Naive thymus-derived CD4-positive, alpha-beta T cell (primary cell): ENCODE measurements at regions of chr1 and their contacts with region 1.

Region 1: GRCh38 chr1:201254625-201255506 is 28.4 kb upstream of the PKP1 start:
- DNase-seq: peak in 8 of 9 donors; percentile 23 to 76 (median 35)
- ATAC-seq: peak; percentile 71
- H3K4me3 ChIP-seq: no peak overlapping the region
- H3K4me3 Mint-ChIP-seq: no peak overlapping the region
- H3K27ac ChIP-seq: no peak overlapping the region
- H3K27ac Mint-ChIP-seq: no peak overlapping the region
- H3K4me1 ChIP-seq: no peaks in the 10 kb centered on the region
- H3K4me1 Mint-ChIP-seq: peaks cover 0 to 2% (median 0%) of the 10 kb centered on the region in 7 donors
- H3K27me3 ChIP-seq: peaks cover 0 to 3% of the 10 kb centered on the region in 2 donors
- H3K27me3 Mint-ChIP-seq: peaks cover 0 to 26% (median 6%) of the 10 kb centered on the region in 5 donors

Region 2: DNA sequence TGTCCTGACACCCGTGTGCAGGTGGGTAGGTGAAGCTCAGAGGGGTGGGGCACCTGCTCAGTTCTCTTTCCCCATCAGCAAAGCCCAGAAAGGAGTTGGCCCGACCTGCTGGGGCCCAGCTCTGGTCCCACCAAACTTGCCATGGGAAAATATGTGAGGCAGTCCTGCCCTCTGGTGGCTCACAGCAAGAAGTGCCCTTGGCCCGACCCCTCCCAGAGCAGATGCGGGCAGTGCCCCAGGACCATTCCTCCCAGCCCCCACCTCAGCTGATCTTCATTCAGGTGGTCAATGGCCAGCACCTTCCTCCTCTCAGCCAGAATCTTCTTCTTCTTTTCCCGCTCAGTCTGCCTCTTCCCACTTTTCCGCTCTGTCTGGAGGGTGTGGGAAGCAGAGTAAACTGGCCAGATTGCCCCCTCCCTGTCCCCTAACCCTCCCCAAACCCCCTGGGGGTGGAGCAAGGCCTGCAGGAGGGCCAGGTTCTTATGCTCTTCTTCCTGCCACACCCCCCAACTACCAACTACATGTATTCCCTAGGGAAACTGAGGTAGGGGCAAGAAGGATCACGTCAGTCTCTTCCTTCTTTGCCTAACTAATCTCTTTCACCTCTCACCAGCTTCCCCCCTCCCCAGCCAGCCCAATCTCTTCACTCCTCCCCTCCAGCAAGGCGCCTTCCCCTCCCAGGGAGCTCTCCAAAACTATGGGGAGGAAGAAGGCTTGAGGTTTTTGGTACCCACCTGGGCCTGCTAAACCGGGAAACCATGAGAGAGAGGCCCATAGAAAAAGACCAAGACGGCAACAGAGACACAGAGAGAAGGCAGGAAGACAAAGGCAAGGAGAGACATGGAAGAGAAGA is 107.0 kb after region 1 on chr1:
- CTCF ChIA-PET with region 1: interaction called, 3 read pairs
- POLR2A ChIA-PET with region 1: no interaction called
- intact Hi-C with region 1: loop called in 1 of 2 experiments (anchors 2 kb)
- DNase-seq: no peak
- ATAC-seq: peak; percentile 33
- H3K4me3 ChIP-seq: no peak overlapping the region
- H3K4me3 Mint-ChIP-seq: no peak overlapping the region
- H3K27ac ChIP-seq: no peak overlapping the region
- H3K27ac Mint-ChIP-seq: no peak overlapping the region
- H3K4me1 ChIP-seq: no peaks in the 10 kb centered on the region
- H3K4me1 Mint-ChIP-seq: no peaks in the 10 kb centered on the region
- H3K27me3 ChIP-seq: no peaks in the 10 kb centered on the region
- H3K27me3 Mint-ChIP-seq: peaks cover 0 to 27% (median 10%) of the 10 kb centered on the region in 5 donors

Region 3: DNA sequence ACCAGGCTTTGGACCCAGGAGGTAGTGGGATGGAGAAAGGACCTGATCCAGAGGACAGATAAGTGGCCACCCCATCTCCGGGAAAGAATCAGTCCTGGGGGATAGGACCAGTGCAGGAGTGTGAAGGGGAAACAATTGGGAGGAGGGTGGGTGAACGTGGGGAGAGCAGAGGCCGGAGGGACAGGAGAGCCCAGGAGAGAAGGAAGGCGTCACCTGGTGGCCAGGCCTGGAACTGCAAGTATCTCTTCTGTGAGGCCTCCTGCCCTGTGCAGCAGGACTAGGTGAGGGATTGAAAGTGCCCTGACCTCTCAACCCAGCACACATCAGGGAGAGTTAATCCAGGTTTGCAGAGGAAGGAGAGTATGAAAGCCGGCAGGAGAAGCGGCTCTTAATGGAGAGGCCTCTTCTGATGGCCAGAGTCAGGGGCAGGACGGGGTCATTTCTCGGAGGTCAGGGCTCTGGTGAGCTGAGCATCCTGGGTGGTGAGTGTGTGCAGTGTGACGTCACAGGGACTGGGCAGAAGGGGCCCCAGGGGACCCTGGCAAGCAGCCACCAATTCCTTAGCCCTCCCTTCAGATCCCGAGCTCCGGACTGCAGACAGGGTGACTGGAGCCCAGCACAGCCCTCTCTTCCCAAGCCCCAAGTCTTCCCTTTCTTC is 153.4 kb after region 1 on chr1:
- CTCF ChIA-PET with region 1: no interaction called
- POLR2A ChIA-PET with region 1: no interaction called
- intact Hi-C with region 1: loop called in 1 of 2 experiments (anchors 1 kb)
- DNase-seq: peak in 8 of 9 donors; percentile 14 to 76 (median 48)
- ATAC-seq: peak; percentile 65
- H3K4me3 ChIP-seq: no peak overlapping the region
- H3K4me3 Mint-ChIP-seq: no peak overlapping the region
- H3K27ac ChIP-seq: no peak overlapping the region
- H3K27ac Mint-ChIP-seq: no peak overlapping the region
- H3K4me1 ChIP-seq: no peaks in the 10 kb centered on the region
- H3K4me1 Mint-ChIP-seq: no peaks in the 10 kb centered on the region
- H3K27me3 ChIP-seq: no peaks in the 10 kb centered on the region
- H3K27me3 Mint-ChIP-seq: peaks cover 0 to 15% (median 0%) of the 10 kb centered on the region in 5 donors